ENCODE measurements at regions of chr6 and their contacts with region 1.

Region 1: DNA sequence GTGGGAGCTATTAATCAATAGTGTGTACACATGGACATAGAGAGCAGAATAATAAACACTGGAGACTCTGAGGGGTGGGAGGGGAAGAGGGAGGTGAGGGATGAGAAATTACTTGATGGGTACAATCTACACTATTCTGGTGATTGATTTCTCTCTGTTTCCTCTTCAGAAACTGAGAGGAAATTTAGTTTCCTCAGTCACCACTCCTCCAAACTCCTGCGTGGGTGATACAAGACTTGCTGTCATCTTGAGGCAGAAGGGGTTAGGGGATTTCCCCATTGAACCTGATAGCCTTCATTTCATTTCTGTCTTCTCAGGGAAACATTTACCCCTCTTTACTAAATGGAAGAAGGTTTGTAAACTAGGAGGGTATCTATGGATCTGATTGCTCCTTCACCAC is 84.3 kb upstream of the ESR1 start:
- DNase-seq: peak; percentile 34
- H3K4me3 Mint-ChIP-seq: no peak overlapping the region
- H3K27ac Mint-ChIP-seq: peak overlapping the region; percentile 32
- H3K4me1 Mint-ChIP-seq: peaks cover 52% of the 10 kb centered on the region
- H3K27me3 Mint-ChIP-seq: peaks cover 2% of the 10 kb centered on the region

Region 2: DNA sequence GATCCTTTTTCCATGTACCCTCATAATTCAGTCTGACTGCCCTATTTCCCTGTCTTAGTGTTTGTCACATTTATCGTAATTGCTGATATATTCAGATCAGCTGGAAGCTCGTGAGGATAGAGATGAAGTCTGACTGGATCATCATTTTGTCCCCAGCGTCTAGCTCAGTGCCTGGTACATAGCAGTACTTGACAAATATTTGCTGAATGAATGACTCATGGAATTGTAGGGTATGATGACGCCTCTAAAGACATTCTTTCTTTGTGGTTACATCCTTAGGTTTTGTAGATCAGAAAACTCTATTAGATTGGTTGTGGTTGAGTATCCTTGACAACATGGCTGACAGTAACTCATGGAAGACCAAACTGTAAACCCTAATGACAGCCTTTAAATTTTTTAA is 788.8 kb before region 1 on chr6:
- intact Hi-C with region 1: no loop called
- DNase-seq: no peak
- H3K4me3 Mint-ChIP-seq: no peak overlapping the region
- H3K27ac Mint-ChIP-seq: no peak overlapping the region
- H3K4me1 Mint-ChIP-seq: no peaks in the 10 kb centered on the region
- H3K27me3 Mint-ChIP-seq: no peaks in the 10 kb centered on the region

Region 3: GRCh38 chr6:151566557-151566956 is 156.6 kb before region 1 on chr6:
- intact Hi-C with region 1: no loop called
- DNase-seq: no peak
- H3K4me3 Mint-ChIP-seq: no peak overlapping the region
- H3K27ac Mint-ChIP-seq: no peak overlapping the region
- H3K4me1 Mint-ChIP-seq: no peaks in the 10 kb centered on the region
- H3K27me3 Mint-ChIP-seq: no peaks in the 10 kb centered on the region

Region 4: DNA sequence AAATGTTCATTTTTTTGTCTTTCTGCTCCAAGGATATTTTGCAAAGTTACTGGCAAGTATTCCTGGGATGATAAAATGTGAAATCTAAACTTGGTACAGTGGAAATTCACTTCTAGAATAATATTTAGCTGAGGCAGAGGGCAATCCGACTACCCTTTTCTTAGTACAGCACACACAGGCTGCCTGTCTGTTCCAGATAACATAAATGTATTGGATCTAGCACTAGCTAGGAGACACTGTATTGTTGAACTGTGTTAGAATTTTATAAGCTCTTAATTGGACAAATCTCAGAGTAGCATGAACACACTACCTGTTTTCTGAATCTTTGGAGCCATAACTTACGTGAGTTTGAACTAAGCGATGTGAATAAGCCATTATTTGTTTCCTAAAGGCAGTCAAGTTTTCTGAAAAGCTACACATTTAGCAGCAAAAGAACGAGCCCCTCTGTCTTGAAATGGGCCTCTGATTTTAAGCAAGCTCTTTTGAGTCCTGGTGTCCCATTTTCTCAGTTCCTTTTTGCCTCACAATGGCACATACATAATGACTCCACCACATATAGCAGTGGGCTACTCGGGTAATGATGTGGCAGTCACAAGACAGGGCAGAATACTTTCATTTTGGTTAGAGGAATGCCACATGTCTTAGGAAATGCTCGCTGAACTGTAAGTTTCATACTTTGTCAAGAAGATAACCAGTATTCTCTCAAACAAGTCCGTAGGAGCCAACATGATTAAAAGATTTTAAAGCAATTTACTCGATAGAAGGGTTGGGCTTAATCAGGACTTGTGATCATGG is 32.2 kb before region 1 on chr6:
- intact Hi-C with region 1: loop called (anchors 1 kb)
- DNase-seq: peak; percentile 45
- H3K4me3 Mint-ChIP-seq: peak overlapping the region; percentile 78
- H3K27ac Mint-ChIP-seq: peak overlapping the region; percentile 64
- H3K4me1 Mint-ChIP-seq: peaks cover 30% of the 10 kb centered on the region
- H3K27me3 Mint-ChIP-seq: peaks cover 10% of the 10 kb centered on the region

Region 5: DNA sequence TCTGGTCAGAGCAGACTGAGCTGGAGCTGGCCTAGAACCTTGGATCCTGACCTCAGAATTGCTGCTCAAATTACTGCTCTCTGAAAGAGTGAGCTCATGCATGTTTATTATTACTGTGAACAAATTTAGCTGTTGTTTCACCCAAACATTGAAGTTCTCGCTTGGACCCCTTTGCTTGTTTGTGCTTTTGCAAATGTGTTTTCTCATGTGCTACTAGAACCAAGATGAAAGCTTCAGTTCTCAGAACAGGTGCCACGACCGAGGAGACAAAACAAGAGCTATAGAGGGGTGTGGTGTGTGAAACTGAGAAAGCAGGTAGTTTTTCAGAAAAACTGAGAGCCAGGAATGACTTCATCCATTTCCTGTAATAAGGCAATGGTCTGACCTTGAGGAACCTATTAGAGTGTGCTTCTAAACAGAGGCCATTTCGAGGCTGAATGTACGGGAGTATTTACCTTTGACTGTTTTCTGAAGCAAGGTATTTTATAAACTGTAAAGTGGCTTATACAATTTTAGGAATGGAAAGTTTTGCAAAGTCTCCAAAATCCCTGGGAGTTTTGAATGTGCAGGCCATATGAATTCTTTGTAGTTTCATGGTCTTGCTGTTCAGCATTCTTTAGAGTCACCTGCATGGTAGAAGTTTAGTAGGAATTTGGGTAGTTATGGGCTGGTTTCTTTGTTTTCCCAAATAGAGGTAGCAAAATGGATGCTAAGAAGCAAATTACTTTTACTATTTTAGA is 34.5 kb after region 1 on chr6:
- intact Hi-C with region 1: loop called (anchors 1 kb)
- DNase-seq: peak; percentile 53
- H3K4me3 Mint-ChIP-seq: peak overlapping the region; percentile 38
- H3K27ac Mint-ChIP-seq: peak overlapping the region; percentile 97
- H3K4me1 Mint-ChIP-seq: peaks cover 63% of the 10 kb centered on the region
- H3K27me3 Mint-ChIP-seq: no peaks in the 10 kb centered on the region

Region 6: DNA sequence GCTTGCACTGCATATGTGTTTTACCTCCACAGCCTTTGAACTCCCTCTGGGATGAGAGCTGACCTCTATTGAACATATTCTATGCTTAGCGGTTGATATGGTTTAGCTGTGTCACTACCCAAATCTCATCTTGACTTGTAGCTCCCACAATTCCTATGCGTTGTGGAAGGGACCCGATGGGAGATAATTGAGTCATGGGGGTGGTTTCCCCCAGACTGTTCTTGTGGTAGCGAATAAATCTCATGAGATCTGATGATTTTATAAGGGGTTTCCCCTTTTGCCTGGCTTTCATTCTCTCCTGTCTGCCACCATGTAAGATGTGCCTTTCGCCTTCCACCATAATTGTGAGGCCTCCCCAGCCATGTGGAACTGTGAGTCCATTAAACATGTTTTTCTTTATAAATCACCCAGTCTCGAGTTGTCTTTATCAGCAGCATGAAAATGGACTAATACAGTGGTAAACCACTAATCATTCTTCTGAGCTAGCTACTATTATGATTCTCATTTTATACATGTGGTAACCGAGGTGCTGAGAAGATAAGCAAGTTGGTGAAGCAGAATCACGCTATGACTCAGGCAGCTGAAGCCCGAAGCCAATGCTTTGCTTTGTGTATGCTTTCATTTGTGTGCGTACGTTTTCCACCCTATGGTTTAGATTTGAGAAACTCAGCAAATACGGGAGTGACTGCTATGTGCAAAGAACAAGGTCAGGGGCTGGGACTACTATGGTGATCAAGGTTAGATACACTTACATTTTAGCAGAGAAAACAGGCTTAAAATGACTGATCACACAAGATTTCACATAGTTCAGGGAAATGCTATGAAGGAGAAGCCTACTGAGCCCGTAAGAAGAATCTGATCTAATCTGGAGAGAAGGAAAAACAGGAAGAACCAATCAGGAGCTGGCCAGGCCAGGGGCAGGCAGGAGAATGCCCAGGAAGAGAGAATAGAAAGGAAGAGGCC is 447.8 kb after region 1 on chr6:
- intact Hi-C with region 1: loop called (anchors 1 kb)
- DNase-seq: peak; percentile 62
- H3K4me3 Mint-ChIP-seq: peak overlapping the region; percentile 59
- H3K27ac Mint-ChIP-seq: peak overlapping the region; percentile 95
- H3K4me1 Mint-ChIP-seq: peaks cover 25% of the 10 kb centered on the region
- H3K27me3 Mint-ChIP-seq: no peaks in the 10 kb centered on the region